ENCODE measurements at regions of chr15 and their contacts with region 1.

Region 1: DNA sequence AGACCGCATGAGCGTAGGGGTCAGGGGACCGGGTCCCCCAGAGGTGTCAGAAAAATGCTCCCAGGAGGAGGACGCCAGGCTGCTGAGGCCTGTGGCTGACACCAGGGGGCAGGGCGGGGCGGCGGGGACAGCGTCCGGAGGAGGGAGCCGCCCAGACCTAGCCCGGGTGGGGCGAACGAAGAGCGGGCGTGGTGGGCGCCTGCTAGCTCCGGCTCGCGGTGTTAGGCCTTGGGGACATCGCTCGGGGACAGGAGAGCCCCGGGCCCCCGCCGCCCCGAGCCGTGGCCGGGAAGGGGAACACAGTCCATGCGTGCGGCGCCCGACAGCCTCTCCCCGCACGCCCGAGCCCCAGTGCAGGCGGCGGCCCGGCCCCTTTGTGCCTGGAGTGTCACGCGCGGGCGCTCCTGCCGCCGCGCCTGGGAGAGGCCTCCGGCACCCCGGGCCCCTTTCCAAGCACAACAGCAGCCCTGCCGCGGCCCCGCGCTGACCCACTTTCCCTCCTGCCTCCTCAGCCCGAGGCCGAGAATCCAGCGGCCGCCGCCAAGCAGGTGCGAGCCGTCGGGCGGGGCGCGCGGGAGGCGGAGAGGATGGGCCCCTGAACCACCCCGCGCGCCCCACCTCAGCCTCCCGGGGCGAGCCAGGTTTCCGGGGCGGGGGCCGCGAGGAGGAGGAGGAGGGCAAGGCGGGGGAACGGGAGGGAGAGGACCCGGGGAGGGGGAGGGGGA is 111.0 kb upstream of the KLF13 start:
- DNase-seq: peak; percentile 86 to 91
- ATAC-seq: peak; percentile 87 to 95 (median 90)
- H3K4me3 ChIP-seq: peak overlapping the region; percentile 5 to 77 (median 62)
- H3K27ac ChIP-seq: peak overlapping the region; percentile 86 to 99 (median 95)
- H3K4me1 ChIP-seq: peaks cover 6 to 70% (median 44%) of the 10 kb centered on the region in 9 donors
- H3K27me3 ChIP-seq: no peaks in the 10 kb centered on the region
- CTCF ChIP-seq: peak; percentile 86 to 99 (median 92)

Region 2: GRCh38 chr15:30675126-30675525 is 540.5 kb before region 1 on chr15:
- intact Hi-C with region 1: no loop called
- DNase-seq: no peak
- ATAC-seq: no peak
- H3K4me3 ChIP-seq: no peak overlapping the region
- H3K27ac ChIP-seq: no peak overlapping the region
- H3K4me1 ChIP-seq: no peaks in the 10 kb centered on the region
- H3K27me3 ChIP-seq: no peaks in the 10 kb centered on the region
- CTCF ChIP-seq: no peak

Region 3: GRCh38 chr15:31265871-31266711 is 50.4 kb after region 1 on chr15:
- intact Hi-C with region 1: loop called in 1 of 10 experiments (anchors 5 kb)
- DNase-seq: peak; percentile 34 to 42
- ATAC-seq: peak; percentile 22 to 67 (median 48)
- H3K4me3 ChIP-seq: no peak overlapping the region
- H3K27ac ChIP-seq: peak overlapping the region in 5 of 10 donors; percentile 31 to 91 (median 48)
- H3K4me1 ChIP-seq: peaks cover 0 to 90% (median 19%) of the 10 kb centered on the region in 9 donors
- H3K27me3 ChIP-seq: no peaks in the 10 kb centered on the region
- CTCF ChIP-seq: no peak

Region 4: GRCh38 chr15:31311735-31312619 is 96.3 kb after region 1 on chr15:
- intact Hi-C with region 1: loop called in 2 of 10 experiments (anchors 2 to 5 kb)
- DNase-seq: peak in 1 of 2 donors; percentile 2
- ATAC-seq: no peak
- H3K4me3 ChIP-seq: no peak overlapping the region
- H3K27ac ChIP-seq: no peak overlapping the region
- H3K4me1 ChIP-seq: peaks cover 0 to 13% (median 7%) of the 10 kb centered on the region in 9 donors
- H3K27me3 ChIP-seq: peaks cover 0 to 6% (median 0%) of the 10 kb centered on the region in 7 donors
- CTCF ChIP-seq: no peak

Region 5: DNA sequence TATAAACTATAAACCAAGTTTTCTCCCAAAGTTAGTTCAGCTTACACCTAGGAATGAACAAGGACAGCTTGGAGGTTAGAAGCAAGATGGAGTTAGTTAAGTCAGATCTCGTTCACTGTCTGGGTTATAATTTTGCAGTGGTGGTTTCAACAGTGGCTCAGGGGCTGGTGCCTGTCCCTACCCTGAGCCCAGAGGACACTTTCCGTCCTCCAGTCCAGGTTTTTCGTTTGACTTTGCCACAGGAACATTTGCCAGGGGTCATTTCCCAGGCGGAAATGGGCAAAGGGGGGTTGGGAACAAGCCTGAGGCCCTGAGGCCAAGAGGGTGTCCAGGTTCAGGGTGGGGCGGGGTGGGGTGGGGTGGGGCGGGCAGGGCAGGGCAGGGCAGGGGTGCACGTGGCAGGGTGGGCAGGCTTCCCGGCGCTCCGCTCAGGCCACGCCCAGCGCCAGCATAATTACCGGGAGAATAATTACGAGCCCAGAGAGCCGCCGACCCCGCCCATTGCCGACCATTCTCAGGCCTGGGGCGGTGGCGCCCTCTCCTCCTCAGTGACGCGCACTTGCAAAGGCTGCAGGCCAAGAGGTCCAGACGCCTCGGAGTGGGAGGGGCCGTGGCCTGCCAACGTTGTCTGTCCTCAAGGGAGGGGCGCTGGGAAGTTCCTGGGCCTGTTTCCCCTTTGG is 181.4 kb after region 1 on chr15:
- intact Hi-C with region 1: loop called in 6 of 10 experiments (anchors 2 to 10 kb)
- DNase-seq: peak; percentile 94 to 95
- ATAC-seq: peak; percentile 82 to 94 (median 92)
- H3K4me3 ChIP-seq: peak overlapping the region in 4 of 10 donors; percentile 4 to 32 (median 14)
- H3K27ac ChIP-seq: peak overlapping the region; percentile 25 to 88 (median 83)
- H3K4me1 ChIP-seq: peaks cover 13 to 59% (median 32%) of the 10 kb centered on the region in 9 donors
- H3K27me3 ChIP-seq: peaks cover 0 to 11% (median 0%) of the 10 kb centered on the region in 7 donors
- CTCF ChIP-seq: peak in 5 of 9 donors; percentile 36 to 60 (median 51)

Region 6: DNA sequence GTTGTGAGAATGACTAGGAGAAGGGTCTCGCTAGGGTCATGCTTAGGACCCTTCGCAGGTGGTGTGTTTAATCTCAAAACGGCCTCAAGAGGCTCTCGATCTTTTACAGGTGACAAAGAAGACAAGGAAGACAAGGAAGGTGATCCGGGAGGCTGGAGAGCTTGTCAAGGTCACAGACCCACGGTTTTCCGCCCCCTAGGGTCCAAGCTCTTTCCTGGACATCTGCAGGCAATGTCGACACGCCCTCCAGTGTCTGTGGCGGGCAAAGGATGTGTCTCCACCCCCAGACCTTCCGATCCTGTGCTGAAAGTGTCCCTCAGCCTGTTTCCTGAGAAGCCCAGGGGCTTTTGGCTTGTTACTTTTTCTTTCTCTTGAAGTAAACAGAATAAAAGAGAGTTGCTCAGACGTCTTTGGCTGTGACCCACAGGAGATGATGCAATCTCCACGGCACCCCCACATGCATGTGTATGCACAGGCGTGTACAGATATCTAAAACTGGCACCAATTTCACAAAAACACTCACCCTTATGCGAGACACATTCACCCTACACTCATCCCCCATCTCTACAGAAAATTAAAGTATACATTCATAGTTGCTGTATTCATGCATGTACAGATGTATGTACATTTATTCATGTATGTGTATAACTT is 219.7 kb after region 1 on chr15:
- intact Hi-C with region 1: loop called in 6 of 10 experiments (anchors 2 to 10 kb)
- DNase-seq: peak; percentile 82 to 87
- ATAC-seq: peak; percentile 82 to 93 (median 89)
- H3K4me3 ChIP-seq: peak overlapping the region in 7 of 10 donors; percentile 3 to 47 (median 23)
- H3K27ac ChIP-seq: peak overlapping the region; percentile 12 to 83 (median 72)
- H3K4me1 ChIP-seq: peaks cover 2 to 50% (median 26%) of the 10 kb centered on the region in 9 donors
- H3K27me3 ChIP-seq: no peaks in the 10 kb centered on the region
- CTCF ChIP-seq: peak; percentile 56 to 94 (median 85)